Heart right ventricle (tissue), 16 donors: ENCODE measurements at regions of chr10 and their contacts with region 1.

Region 1: DNA sequence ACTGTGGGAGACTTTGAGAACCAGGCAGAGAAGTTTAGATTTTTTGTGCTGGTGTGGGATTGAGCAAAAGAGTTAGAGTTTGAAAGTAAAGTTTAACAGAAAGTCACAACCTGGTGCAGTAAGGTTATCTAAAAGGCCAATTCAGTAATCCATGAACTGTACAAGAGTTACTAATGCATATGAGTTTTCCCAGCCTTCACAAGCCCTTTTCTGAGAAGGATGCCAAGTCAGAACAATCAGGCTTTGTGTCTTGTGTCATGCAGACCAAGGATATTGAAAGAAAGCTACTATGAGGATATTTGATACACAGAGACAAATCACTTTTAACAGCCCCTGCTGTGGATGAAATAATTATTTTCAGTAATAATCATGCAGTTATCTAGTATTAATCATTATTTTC is 68.8 kb upstream of the MYO3A start:
- DNase-seq: no peak
- ATAC-seq: no peak
- H3K4me3 ChIP-seq: no peak overlapping the region
- H3K27ac ChIP-seq: no peak overlapping the region
- H3K4me1 ChIP-seq: no peaks in the 10 kb centered on the region
- H3K27me3 ChIP-seq: no peaks in the 10 kb centered on the region
- CTCF ChIP-seq: no peak

Region 2: GRCh38 chr10:25786161-25786560 is 79.1 kb before region 1 on chr10:
- intact Hi-C with region 1: no loop called
- DNase-seq: no peak
- ATAC-seq: no peak
- H3K4me3 ChIP-seq: no peak overlapping the region
- H3K27ac ChIP-seq: no peak overlapping the region
- H3K4me1 ChIP-seq: no peaks in the 10 kb centered on the region
- H3K27me3 ChIP-seq: peaks cover 0 to 10% (median 0%) of the 10 kb centered on the region in 7 donors
- CTCF ChIP-seq: no peak

Region 3: GRCh38 chr10:25888627-25889026 is 23.4 kb after region 1 on chr10:
- intact Hi-C with region 1: loop called in 1 of 10 experiments (anchors 2 kb)
- DNase-seq: no peak
- ATAC-seq: no peak
- H3K4me3 ChIP-seq: no peak overlapping the region
- H3K27ac ChIP-seq: no peak overlapping the region
- H3K4me1 ChIP-seq: no peaks in the 10 kb centered on the region
- H3K27me3 ChIP-seq: no peaks in the 10 kb centered on the region
- CTCF ChIP-seq: no peak

Region 4: DNA sequence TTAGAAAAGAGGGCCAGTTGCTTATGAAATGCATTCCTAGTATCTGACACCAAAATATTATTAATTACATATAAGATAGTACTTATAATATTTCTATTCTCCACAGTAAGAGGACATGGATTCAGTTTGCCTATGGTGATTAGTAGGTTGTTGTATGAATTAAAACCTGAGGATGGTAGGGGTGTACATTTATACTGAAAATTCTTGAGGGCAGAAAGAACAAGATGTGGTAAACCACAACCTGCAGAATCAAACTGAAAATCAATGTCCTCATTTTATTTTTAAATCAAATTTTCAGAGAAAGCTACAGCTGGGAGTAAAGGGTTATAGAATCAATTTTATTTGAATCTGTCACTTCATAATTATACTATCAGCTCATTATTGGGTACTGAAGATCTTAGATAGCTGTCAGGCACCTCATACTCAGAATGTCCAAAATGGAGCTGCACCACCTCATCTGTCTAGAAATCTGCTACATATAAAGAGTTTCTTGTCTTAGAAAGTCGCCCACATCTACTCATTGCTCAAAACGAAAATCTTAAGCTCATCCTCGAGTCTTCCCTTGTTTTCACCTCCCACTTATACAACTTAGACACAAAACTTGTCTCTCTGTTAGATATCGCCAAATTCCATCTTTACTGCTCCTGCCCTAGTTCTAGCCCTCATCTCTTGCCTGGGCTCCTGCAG is 134.2 kb after region 1 on chr10:
- intact Hi-C with region 1: no loop called
- DNase-seq: no peak
- ATAC-seq: no peak
- H3K4me3 ChIP-seq: no peak overlapping the region
- H3K27ac ChIP-seq: no peak overlapping the region
- H3K4me1 ChIP-seq: no peaks in the 10 kb centered on the region
- H3K27me3 ChIP-seq: peaks cover 0 to 7% (median 0%) of the 10 kb centered on the region in 7 donors
- CTCF ChIP-seq: no peak

Region 5: GRCh38 chr10:26205223-26205622 is 340.0 kb after region 1 on chr10:
- intact Hi-C with region 1: no loop called
- DNase-seq: no peak
- ATAC-seq: no peak
- H3K4me3 ChIP-seq: no peak overlapping the region
- H3K27ac ChIP-seq: no peak overlapping the region
- H3K4me1 ChIP-seq: no peaks in the 10 kb centered on the region
- H3K27me3 ChIP-seq: peaks cover 0 to 23% (median 2%) of the 10 kb centered on the region in 7 donors
- CTCF ChIP-seq: no peak